ENCODE measurements at regions of chr11 and their contacts with region 1.

Region 1: GRCh38 chr11:57345555-57346211 is 7.5 kb downstream of the P2RX3 start:
- DNase-seq: peak; percentile 77 to 78
- H3K4me3 ChIP-seq: no peak overlapping the region
- H3K27ac ChIP-seq: no peak overlapping the region
- H3K4me1 ChIP-seq: peaks cover 0 to 6% of the 10 kb centered on the region in 2 donors
- H3K27me3 ChIP-seq: no peaks in the 10 kb centered on the region
- CTCF ChIP-seq: peak; percentile 55 to 83 (median 62)
- POLR2A ChIP-seq: no peak

Region 2: GRCh38 chr11:57417056-57417455 is 71.4 kb after region 1 on chr11:
- intact Hi-C with region 1: no loop called
- DNase-seq: peak; percentile 86 to 87
- H3K4me3 ChIP-seq: no peak overlapping the region
- H3K27ac ChIP-seq: peak overlapping the region; percentile 44 to 66 (median 58)
- H3K4me1 ChIP-seq: peaks cover 15 to 43% of the 10 kb centered on the region in 2 donors
- H3K27me3 ChIP-seq: no peaks in the 10 kb centered on the region
- CTCF ChIP-seq: no peak
- POLR2A ChIP-seq: no peak

Region 3: DNA sequence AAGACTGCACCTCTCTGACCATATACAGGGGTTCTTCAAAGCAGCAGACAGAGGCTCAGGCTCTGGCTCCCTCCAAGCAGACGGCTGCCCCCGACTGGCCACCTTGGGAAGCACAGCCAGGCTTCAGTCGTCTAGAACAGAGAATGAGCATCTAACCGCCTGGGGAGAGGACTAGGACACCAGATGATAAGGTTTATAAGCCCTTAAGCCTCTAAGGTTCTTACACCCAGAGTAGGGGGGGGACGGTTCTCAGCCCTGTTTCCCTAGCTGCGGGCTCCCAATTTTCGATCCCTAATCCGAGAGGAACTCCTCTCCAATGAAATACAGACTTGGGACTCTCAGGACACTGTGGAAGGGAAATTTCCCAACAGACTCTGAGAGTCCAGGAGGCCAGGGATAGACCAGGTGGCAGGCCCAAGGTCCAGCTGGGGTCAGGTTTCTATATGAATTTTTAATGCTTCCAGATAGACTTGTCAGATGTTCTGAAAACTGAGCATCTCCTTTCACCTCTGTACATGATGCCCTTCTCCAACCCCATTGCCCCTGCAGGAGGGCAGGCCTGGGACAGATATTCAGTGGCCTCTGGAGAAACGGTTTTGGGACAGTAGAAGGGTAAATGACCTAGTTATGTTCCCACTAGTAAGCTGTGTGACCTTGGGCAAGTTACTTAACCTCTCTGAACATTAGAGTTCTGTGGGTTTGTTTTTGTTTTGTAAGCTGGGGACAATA is 134.9 kb after region 1 on chr11:
- intact Hi-C with region 1: loop called (anchors 5 kb)
- DNase-seq: peak; percentile 68 to 78
- H3K4me3 ChIP-seq: no peak overlapping the region
- H3K27ac ChIP-seq: no peak overlapping the region
- H3K4me1 ChIP-seq: peaks cover 11 to 21% of the 10 kb centered on the region in 2 donors
- H3K27me3 ChIP-seq: no peaks in the 10 kb centered on the region
- CTCF ChIP-seq: peak; percentile 61 to 82 (median 64)
- POLR2A ChIP-seq: no peak

Region 4: DNA sequence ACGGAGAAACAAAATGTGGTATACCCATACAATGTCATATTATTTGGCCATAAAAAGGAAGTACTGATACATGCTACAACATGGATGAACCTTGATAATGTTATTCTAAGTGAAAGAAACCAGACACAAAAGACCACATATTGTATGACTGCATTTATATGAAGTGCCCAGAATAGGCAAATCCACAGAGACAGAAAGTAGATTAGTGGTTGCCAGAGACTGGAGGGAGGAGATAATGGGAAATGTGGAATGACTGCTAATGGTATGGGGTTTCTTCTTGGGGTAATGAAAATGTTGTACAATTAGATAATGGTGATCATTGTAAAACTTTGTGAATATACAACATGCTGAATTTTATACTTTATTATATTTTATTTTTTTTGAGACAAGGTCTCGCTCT is 175.4 kb after region 1 on chr11:
- intact Hi-C with region 1: loop called (anchors 2 kb)
- DNase-seq: no peak
- H3K4me3 ChIP-seq: no peak overlapping the region
- H3K27ac ChIP-seq: no peak overlapping the region
- H3K4me1 ChIP-seq: no peaks in the 10 kb centered on the region
- H3K27me3 ChIP-seq: no peaks in the 10 kb centered on the region
- CTCF ChIP-seq: no peak
- POLR2A ChIP-seq: no peak

Region 5: GRCh38 chr11:57527056-57527631 is 181.5 kb after region 1 on chr11:
- intact Hi-C with region 1: loop called (anchors 2 kb)
- DNase-seq: peak; percentile 78 to 82
- H3K4me3 ChIP-seq: no peak overlapping the region
- H3K27ac ChIP-seq: no peak overlapping the region
- H3K4me1 ChIP-seq: peaks cover 10 to 15% of the 10 kb centered on the region in 2 donors
- H3K27me3 ChIP-seq: no peaks in the 10 kb centered on the region
- CTCF ChIP-seq: peak; percentile 69 to 99 (median 92)
- POLR2A ChIP-seq: no peak

Region 6: GRCh38 chr11:57644748-57645688 is 299.3 kb after region 1 on chr11:
- intact Hi-C with region 1: loop called (anchors 10 kb)
- DNase-seq: peak; percentile 79 to 85
- H3K4me3 ChIP-seq: no peak overlapping the region
- H3K27ac ChIP-seq: peak overlapping the region in 2 of 3 donors; percentile 62 to 81
- H3K4me1 ChIP-seq: peaks cover 69 to 100% of the 10 kb centered on the region in 2 donors
- H3K27me3 ChIP-seq: peaks cover 3% of the 10 kb centered on the region
- CTCF ChIP-seq: peak; percentile 50 to 88 (median 76)
- POLR2A ChIP-seq: no peak